Psoas muscle (tissue), 8 donors: ENCODE measurements at regions of chr22 and their contacts with region 1.

Region 1: GRCh38 chr22:20156611-20157429 is 6.0 kb upstream of the CCDC188 start:
- DNase-seq: peak; percentile 79 to 89
- ATAC-seq: peak; percentile 77 to 91 (median 88)
- H3K4me3 ChIP-seq: no peak overlapping the region
- H3K27ac ChIP-seq: no peak overlapping the region
- H3K4me1 ChIP-seq: no peaks in the 10 kb centered on the region
- H3K27me3 ChIP-seq: no peaks in the 10 kb centered on the region
- CTCF ChIP-seq: peak; percentile 99

Region 2: DNA sequence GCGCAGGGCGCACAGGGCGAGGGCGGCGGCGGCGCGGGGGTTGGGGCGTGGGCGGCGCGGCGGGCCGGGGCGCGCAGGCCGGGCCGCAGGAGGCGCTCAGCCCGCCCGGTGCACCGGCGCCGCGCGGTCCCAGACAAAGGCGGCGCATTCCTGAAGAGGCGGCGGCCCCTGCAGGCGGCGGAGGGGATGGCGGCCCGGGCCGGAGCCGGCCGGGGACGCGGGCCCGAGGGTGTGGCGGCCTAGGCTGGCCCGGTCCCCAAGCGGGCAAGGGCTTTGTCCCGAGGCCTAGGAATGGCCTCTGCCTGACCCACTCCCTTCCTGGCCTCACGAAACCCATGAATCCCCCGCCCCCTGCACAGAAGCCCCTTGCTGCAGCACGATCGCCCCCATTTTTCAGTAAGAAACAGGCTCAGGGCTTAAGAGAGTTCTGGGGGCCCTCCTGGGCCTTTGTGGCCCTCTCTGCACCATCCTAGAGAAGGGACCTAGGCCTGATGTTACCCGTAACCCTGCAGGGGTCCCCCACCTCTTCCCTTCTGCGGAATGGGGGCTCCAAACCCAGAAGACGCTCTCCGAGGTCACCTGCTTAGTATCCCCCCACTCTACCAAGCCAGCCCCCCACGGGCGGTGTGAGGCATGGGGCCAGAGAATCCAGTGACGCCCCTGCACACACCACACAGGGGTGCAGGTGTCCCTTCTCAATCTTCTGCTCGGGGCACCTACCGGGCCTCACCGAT is 111.6 kb after region 1 on chr22 and contains the start of gene RTN4R:
- intact Hi-C with region 1: loop called in 1 of 2 experiments (anchors 1 kb)
- DNase-seq: peak; percentile 69 to 73
- ATAC-seq: peak; percentile 72 to 88 (median 81)
- H3K4me3 ChIP-seq: peak within 1 kb of the TSS; percentile 55
- H3K27ac ChIP-seq: no peak within 1 kb of the TSS
- H3K4me1 ChIP-seq: no peaks in the 10 kb centered on the region
- H3K27me3 ChIP-seq: no peaks in the 10 kb centered on the region
- CTCF ChIP-seq: peak; percentile 63
- total RNA-seq, gene RTN4R: 0.22 to 2.4 (median 0.64) TPM

Region 3: GRCh38 chr22:20283674-20284066 is 126.8 kb after region 1 on chr22:
- intact Hi-C with region 1: loop called (anchors 1 to 2 kb)
- DNase-seq: no peak
- ATAC-seq: no peak
- H3K4me3 ChIP-seq: no peak overlapping the region
- H3K27ac ChIP-seq: no peak overlapping the region
- H3K4me1 ChIP-seq: no peaks in the 10 kb centered on the region
- H3K27me3 ChIP-seq: no peaks in the 10 kb centered on the region
- CTCF ChIP-seq: no peak

Region 4: DNA sequence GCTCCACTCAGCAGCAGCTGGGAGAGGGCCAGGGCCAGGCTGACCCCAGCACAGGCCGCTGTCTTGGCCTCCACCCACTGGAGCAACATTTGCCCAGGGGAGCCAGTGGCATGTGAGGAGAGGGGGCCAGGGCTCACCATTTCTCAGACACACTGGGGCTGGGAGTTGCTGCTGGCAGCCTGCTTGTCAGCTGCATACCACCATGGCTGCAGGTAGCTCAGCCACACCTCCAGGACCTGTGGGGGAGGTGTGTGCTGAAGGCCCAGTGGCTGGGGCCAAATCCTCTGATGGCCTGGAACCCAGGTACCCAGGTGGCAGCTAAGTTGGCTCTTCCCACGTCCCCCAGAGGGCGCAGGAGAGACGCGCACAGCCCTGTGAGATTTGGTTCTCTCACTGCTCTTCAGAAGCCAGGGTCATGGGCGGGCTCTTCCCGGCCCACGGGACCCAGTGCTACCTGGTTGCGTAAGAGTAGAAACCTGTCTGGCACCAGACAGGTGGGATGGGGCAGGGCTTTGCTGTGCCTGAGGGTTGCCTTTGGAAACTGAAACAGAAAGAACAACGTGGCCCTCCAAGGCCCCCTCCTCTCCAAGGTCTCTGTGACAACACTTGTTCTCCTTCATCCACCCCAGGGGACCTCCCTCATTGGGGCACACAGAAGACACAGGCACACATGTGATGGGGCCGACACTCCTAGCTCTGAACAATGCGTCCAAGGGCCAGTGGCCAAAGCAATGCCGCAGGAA is 449.4 kb after region 1 on chr22:
- intact Hi-C with region 1: loop called in 1 of 2 experiments (anchors 5 kb)
- DNase-seq: no peak
- ATAC-seq: peak in 3 of 4 donors; percentile 33 to 71 (median 66)
- H3K4me3 ChIP-seq: no peak overlapping the region
- H3K27ac ChIP-seq: no peak overlapping the region
- H3K4me1 ChIP-seq: no peaks in the 10 kb centered on the region
- H3K27me3 ChIP-seq: no peaks in the 10 kb centered on the region
- CTCF ChIP-seq: peak; percentile 47

Region 5: GRCh38 chr22:20852076-20852475 is 695.3 kb after region 1 on chr22:
- intact Hi-C with region 1: no loop called
- DNase-seq: no peak
- ATAC-seq: no peak
- H3K4me3 ChIP-seq: no peak overlapping the region
- H3K27ac ChIP-seq: no peak overlapping the region
- H3K4me1 ChIP-seq: peaks cover 6% of the 10 kb centered on the region
- H3K27me3 ChIP-seq: no peaks in the 10 kb centered on the region
- CTCF ChIP-seq: no peak